ENCODE measurements at regions of chr14 and their contacts with region 1.

Region 1: GRCh38 chr14:20970983-20971704 is 15.9 kb downstream of the RNASE2 start:
- DNase-seq: peak; percentile 85 to 94 (median 94)
- ATAC-seq: peak; percentile 97
- H3K4me3 ChIP-seq: peak overlapping the region; percentile 51
- H3K27ac ChIP-seq: peak overlapping the region; percentile 55
- H3K4me1 ChIP-seq: no peaks in the 10 kb centered on the region
- H3K27me3 ChIP-seq: no peaks in the 10 kb centered on the region

Region 2: DNA sequence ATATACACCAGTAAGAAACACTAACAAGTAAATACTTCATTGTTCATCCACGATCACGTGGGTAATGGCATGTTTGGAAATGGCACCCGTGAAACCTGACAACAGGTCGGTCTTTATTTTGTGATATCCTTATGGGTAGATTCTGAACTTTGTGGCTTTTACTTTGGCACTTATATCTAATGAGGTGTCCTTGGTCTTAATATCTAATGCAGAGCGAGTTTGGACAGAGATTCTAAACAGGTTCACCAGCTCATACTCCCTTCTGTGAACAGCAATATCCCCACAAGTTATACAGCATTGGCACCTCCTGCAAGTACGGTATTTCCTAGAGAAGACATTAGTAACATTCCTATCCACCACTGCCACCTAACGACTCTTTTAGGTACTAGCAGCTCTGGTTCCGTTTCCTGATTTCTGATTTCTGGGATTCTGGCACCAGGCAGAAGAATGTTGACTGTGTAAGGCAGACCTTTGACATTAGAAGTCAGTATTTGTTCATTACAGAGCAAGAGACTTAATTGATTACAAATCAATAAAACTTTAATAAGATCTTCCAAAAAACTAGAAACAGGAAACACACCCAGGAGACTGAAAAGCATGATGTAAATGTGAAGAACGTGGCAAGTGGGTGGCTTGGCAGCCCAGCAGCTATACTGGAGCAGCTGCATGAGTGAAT is 280.2 kb before region 1 on chr14:
- intact Hi-C with region 1: loop called in 3 of 4 experiments (anchors 10 kb)
- DNase-seq: no peak
- ATAC-seq: peak; percentile 85 to 88
- H3K4me3 ChIP-seq: no peak overlapping the region
- H3K27ac ChIP-seq: no peak overlapping the region
- H3K4me1 ChIP-seq: no peaks in the 10 kb centered on the region
- H3K27me3 ChIP-seq: no peaks in the 10 kb centered on the region

Region 3: GRCh38 chr14:20855652-20856291 is 115.4 kb before region 1 on chr14:
- intact Hi-C with region 1: loop called in 1 of 4 experiments (anchors 5 kb)
- DNase-seq: peak; percentile 47 to 71 (median 68)
- ATAC-seq: peak; percentile 95 to 97
- H3K4me3 ChIP-seq: no peak overlapping the region
- H3K27ac ChIP-seq: no peak overlapping the region
- H3K4me1 ChIP-seq: no peaks in the 10 kb centered on the region
- H3K27me3 ChIP-seq: no peaks in the 10 kb centered on the region

Region 4: GRCh38 chr14:20873370-20874177 is 97.6 kb before region 1 on chr14:
- intact Hi-C with region 1: loop called in 1 of 4 experiments (anchors 10 kb)
- DNase-seq: peak; percentile 91 to 96 (median 96)
- ATAC-seq: peak; percentile 97 to 99
- H3K4me3 ChIP-seq: peak overlapping the region; percentile 30
- H3K27ac ChIP-seq: no peak overlapping the region
- H3K4me1 ChIP-seq: no peaks in the 10 kb centered on the region
- H3K27me3 ChIP-seq: no peaks in the 10 kb centered on the region

Region 5: GRCh38 chr14:21039585-21040369 is 68.6 kb after region 1 on chr14:
- intact Hi-C with region 1: loop called in 1 of 4 experiments (anchors 10 kb)
- DNase-seq: peak in 2 of 3 donors; percentile 58 to 67
- ATAC-seq: peak; percentile 74 to 78
- H3K4me3 ChIP-seq: no peak overlapping the region
- H3K27ac ChIP-seq: peak overlapping the region; percentile 70
- H3K4me1 ChIP-seq: peaks cover 22% of the 10 kb centered on the region
- H3K27me3 ChIP-seq: no peaks in the 10 kb centered on the region